OCI-LY7 (cell line): ENCODE measurements at regions of chr1 and their contacts with region 1.

Region 1: GRCh38 chr1:209747580-209748262 is 8.1 kb upstream of the TRAF3IP3 start:
- DNase-seq: peak; percentile 53
- H3K4me3 ChIP-seq: peak overlapping the region; percentile 25
- H3K27ac ChIP-seq: no peak overlapping the region
- H3K4me1 ChIP-seq: peaks cover 13% of the 10 kb centered on the region
- CTCF ChIP-seq: peak; percentile 93

Region 2: DNA sequence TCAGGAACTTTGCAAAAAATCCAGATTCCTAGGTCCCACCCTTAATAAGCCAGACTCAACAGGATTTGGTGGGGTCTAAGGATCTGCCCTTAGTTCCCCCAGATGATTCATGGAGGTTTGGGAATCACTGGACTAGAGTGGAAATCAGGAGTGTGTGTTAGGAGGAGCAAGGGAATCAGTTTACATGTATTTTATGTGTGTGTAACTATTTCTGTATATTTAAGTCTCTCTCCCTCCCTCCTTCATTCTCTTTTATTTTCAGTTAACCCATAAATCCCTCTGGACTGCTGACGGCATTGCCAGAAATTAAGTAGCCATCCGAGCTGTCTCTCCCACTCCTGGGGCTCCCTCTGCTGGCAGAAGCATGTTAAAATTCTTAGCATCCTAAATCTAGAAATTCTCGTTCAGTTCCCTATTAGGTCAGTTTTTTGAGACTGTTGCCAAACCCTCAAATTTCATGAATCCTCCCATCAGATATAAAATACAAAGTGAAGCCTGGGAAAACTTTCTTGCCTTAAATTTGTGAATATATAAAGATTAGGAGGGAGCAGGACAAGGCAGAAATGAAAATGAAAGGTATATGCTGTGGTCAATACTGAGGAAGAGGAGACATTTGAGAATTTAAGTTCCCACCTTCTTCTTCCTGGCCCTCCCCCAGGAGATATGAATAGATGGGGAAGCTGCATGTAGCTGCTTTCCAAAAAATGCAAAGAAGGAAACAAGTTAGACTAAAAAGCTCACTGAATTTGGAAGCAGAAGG is 54.8 kb before region 1 on chr1:
- CTCF ChIA-PET with region 1: no interaction called
- POLR2A ChIA-PET with region 1: no interaction called
- intact Hi-C with region 1: loop called (anchors 5 kb)
- DNase-seq: peak; percentile 63
- H3K4me3 ChIP-seq: no peak overlapping the region
- H3K27ac ChIP-seq: no peak overlapping the region
- H3K4me1 ChIP-seq: no peaks in the 10 kb centered on the region
- CTCF ChIP-seq: peak; percentile 96

Region 3: GRCh38 chr1:209884665-209885117 is 137.0 kb after region 1 on chr1:
- CTCF ChIA-PET with region 1: no interaction called
- POLR2A ChIA-PET with region 1: no interaction called
- intact Hi-C with region 1: no loop called
- DNase-seq: no peak
- H3K4me3 ChIP-seq: no peak overlapping the region
- H3K27ac ChIP-seq: no peak overlapping the region
- H3K4me1 ChIP-seq: no peaks in the 10 kb centered on the region
- CTCF ChIP-seq: no peak